Dorsolateral prefrontal cortex (tissue), 120 donors: ENCODE measurements at regions of chr4 and their contacts with region 1.

Region 1: DNA sequence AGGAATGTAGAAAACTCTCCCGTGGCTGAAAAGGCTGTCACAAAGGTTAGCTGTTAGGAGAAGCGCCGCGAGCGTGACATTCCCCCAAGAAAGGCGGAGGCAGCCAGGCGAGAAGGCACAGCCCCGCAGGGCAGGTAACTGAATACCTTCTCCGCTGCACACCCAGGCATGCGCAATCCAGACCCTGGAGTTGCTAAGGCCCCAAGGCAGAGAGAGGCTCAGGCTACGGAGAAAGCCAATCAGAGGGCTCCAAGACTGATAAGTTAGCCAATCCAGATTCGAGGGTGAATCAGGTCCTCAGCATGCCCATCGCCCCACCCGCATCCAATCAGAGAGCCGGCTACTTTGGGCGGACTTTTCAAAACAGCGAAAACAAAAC is 485 bp upstream of the CCNG2 start:
- DNase-seq: peak; percentile 86 to 99 (median 97)
- H3K4me3 ChIP-seq: peak overlapping the region; percentile 71 to 100 (median 94)
- H3K27ac ChIP-seq: peak overlapping the region; percentile 84 to 99 (median 97)
- H3K27me3 ChIP-seq: no peaks in the 10 kb centered on the region
- CTCF ChIP-seq: peak in 3 of 56 donors; percentile 8 to 11 (median 8)

Region 2: GRCh38 chr4:76949276-76950051 is 207.1 kb before region 1 on chr4 and contains the start of gene SEPTIN11:
- intact Hi-C with region 1: loop called in 1 of 2 experiments (anchors 5 kb)
- DNase-seq: peak; percentile 82 to 93 (median 91)
- H3K4me3 ChIP-seq: peak within 1 kb of the TSS; percentile 64 to 96 (median 86)
- H3K27ac ChIP-seq: peak within 1 kb of the TSS; percentile 74 to 99 (median 93)
- H3K27me3 ChIP-seq: no peaks in the 10 kb centered on the region
- CTCF ChIP-seq: peak in 13 of 56 donors; percentile 3 to 46 (median 10)
- total RNA-seq, gene SEPTIN11: 109 to 284 (median 200) TPM

Region 3: GRCh38 chr4:77075869-77076799 is 80.4 kb before region 1 on chr4 and contains the start of gene CCNI:
- intact Hi-C with region 1: loop called (anchors 1 to 2 kb)
- DNase-seq: peak; percentile 85 to 94 (median 93)
- H3K4me3 ChIP-seq: peak within 1 kb of the TSS; percentile 46 to 97 (median 83)
- H3K27ac ChIP-seq: peak within 1 kb of the TSS; percentile 92 to 100 (median 99)
- H3K27me3 ChIP-seq: no peaks in the 10 kb centered on the region
- CTCF ChIP-seq: peak in 16 of 56 donors; percentile 6 to 41 (median 28)
- total RNA-seq, gene CCNI: 250 to 549 (median 371) TPM

Region 4: GRCh38 chr4:77095101-77095821 is 61.3 kb before region 1 on chr4:
- intact Hi-C with region 1: loop called in 1 of 2 experiments (anchors 5 kb)
- DNase-seq: peak; percentile 74 to 92 (median 80)
- H3K4me3 ChIP-seq: peak overlapping the region in 7 of 59 donors; percentile 1 to 28 (median 9)
- H3K27ac ChIP-seq: no peak overlapping the region
- H3K27me3 ChIP-seq: no peaks in the 10 kb centered on the region
- CTCF ChIP-seq: peak; percentile 73 to 93 (median 86)

Region 5: GRCh38 chr4:77120886-77121508 is 35.5 kb before region 1 on chr4:
- intact Hi-C with region 1: loop called in 1 of 2 experiments (anchors 1 kb)
- DNase-seq: peak in 1 of 10 donors; percentile 26
- H3K4me3 ChIP-seq: no peak overlapping the region
- H3K27ac ChIP-seq: no peak overlapping the region
- H3K27me3 ChIP-seq: no peaks in the 10 kb centered on the region
- CTCF ChIP-seq: peak in 23 of 56 donors; percentile 10 to 49 (median 30)